Naive thymus-derived CD4-positive, alpha-beta T cell (primary cell): ENCODE measurements at regions of chr4 and their contacts with region 1.

Region 1: DNA sequence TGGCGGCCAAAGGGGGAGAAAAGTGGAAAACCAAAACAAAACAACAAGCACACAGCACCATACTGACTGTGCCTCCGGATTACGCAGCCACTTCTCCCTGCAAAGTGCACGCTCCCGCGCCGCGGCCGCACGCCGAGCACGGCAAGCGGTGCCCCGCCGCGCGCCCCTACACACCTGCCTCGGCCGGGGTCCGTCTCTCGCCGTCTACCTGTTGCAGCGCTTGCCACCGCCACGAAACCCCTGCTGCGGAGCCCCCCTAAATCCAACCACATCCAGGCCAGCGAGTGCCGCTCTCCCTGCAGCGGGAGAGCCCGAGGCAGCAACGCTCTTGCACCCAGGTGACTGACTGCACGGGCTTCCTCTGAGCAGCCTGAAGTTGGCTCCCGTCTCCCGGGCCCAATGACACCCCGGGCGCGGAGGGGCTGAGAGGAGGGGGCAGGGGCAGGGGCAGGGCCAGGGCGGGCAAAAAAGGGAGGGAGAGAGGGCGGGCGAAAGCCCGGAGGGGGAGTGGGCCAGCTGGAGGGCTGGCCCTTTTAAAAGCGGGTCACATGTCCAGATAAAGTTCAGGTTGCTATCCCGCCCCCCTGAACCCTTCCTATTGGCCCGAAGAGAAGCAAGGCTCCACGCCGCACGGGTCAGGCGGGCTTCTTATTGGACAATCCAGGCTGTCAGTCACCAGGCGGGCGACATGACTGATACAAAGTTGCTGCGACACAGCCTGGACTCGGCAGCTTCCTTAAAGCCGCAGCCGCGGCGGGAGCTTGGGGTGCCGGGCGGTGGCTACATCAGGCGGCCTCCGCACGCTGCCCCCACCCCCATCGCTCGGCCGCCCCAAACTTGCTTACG is at the start of gene NR3C2:
- DNase-seq: peak; percentile 87 to 100 (median 98)
- ATAC-seq: peak; percentile 88
- H3K4me3 ChIP-seq: peak within 1 kb of the TSS; percentile 99
- H3K4me3 Mint-ChIP-seq: peak within 1 kb of the TSS; percentile 90 to 100 (median 98)
- H3K27ac ChIP-seq: peak within 1 kb of the TSS; percentile 93
- H3K27ac Mint-ChIP-seq: peak within 1 kb of the TSS; percentile 94 to 100 (median 98)
- H3K4me1 ChIP-seq: peaks cover 0 to 29% of the 10 kb centered on the region in 2 donors
- H3K4me1 Mint-ChIP-seq: peaks cover 24 to 60% (median 55%) of the 10 kb centered on the region in 7 donors
- H3K27me3 ChIP-seq: no peaks in the 10 kb centered on the region
- H3K27me3 Mint-ChIP-seq: peaks cover 0 to 58% (median 5%) of the 10 kb centered on the region in 5 donors
- total RNA-seq, gene NR3C2: 2.2 to 55.2 (median 49.3) TPM

Region 2: DNA sequence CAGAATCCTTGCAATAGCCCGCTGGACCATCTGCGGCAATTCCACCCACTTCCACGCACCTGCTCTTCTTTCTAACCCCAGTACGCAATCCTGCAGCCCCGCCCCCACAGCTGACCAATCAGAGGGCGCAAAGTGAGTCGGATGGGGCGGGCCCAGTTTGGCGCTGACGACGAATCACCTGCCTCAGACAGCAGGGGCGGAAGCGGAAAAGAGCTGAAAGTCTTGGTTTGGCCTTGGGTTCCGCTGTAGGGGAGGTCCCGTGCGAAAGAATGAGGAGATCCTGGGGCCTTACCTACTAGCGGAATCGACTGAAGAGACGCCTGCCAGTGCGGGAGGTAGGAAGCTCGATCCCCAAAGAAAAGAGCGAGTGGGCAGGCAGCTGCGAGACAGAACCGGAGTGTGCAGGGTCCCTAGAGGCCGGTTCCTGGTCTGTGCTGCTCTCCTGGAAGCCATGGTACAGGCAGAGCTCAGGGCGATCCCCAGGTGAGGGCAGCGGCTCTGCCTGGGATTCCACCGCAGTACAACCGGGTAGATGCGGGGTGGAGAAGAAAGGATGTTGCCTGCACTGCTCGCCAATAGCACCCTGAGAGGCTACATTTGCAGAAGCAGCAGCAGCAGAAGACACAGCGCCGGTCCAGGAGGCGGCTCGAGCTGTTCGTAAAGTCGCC is 824.9 kb before region 1 on chr4 and contains the start of gene TMEM184C:
- CTCF ChIA-PET with region 1: no interaction called
- POLR2A ChIA-PET with region 1: interaction called, 10 read pairs
- intact Hi-C with region 1: loop called (anchors 1 kb)
- DNase-seq: peak; percentile 97 to 99 (median 98)
- ATAC-seq: peak; percentile 97
- H3K4me3 ChIP-seq: peak within 1 kb of the TSS; percentile 89
- H3K4me3 Mint-ChIP-seq: peak within 1 kb of the TSS; percentile 86 to 98 (median 94)
- H3K27ac ChIP-seq: peak within 1 kb of the TSS; percentile 87
- H3K27ac Mint-ChIP-seq: peak within 1 kb of the TSS; percentile 92 to 99 (median 95)
- H3K4me1 ChIP-seq: peaks cover 21 to 30% of the 10 kb centered on the region in 2 donors
- H3K4me1 Mint-ChIP-seq: peaks cover 21 to 48% (median 33%) of the 10 kb centered on the region in 7 donors
- H3K27me3 ChIP-seq: no peaks in the 10 kb centered on the region
- H3K27me3 Mint-ChIP-seq: peaks cover 0 to 22% (median 4%) of the 10 kb centered on the region in 5 donors
- total RNA-seq, gene TMEM184C: 13.7 to 27.4 (median 19.0) TPM

Region 3: DNA sequence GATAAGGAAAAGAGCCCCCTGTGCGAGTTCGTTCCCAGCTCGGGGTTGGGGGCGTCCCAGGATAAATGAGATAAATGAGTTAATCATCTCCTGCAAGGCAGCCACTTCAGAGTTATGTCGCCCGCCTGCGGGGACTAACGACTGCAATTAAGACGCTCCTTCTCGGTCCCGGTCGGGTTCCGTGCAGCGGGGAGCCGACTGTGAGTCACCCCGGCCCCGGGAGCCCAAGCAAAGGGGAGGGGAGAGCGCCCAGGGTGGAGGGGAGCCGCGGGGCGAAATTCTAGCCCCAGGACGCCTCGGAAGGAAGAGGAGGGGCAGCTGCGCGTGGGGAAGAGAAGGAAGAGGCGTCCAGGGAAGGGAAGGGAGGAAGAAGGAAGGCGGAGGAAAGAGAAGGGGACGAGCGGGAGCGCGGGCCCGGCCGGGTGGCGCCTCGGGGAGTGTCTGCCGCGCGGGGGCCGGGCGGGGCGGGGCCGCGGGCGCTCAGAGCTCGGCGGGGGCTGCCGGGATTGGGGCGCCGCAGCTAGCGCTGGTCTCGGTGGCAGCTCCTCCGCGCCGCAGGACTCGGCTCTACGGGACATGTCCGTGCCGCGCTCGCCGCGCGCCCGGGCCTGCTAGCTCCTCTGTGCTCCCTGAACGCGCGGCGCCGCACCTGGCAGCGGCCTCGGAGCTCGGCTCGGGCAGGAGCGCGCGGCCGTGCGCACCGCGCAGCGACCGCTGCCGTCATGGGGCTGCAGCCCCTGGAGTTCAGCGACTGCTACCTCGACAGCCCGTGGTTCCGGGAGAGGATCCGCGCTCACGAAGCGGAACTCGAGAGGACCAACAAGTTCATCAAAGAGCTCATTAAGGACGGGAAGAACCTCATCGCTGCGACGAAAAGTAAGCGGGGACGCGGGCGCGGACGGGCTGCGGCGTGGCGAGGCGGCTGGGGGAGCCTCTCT is 710.4 kb before region 1 on chr4 and contains the start of gene ARHGAP10:
- CTCF ChIA-PET with region 1: no interaction called
- POLR2A ChIA-PET with region 1: interaction called, 4 read pairs
- intact Hi-C with region 1: loop called (anchors 2 kb)
- DNase-seq: peak; percentile 34 to 74 (median 54)
- ATAC-seq: peak; percentile 79
- H3K4me3 ChIP-seq: peak within 1 kb of the TSS; percentile 76
- H3K4me3 Mint-ChIP-seq: peak within 1 kb of the TSS; percentile 89 to 97 (median 92)
- H3K27ac ChIP-seq: peak within 1 kb of the TSS; percentile 63
- H3K27ac Mint-ChIP-seq: peak within 1 kb of the TSS; percentile 75 to 93 (median 88)
- H3K4me1 ChIP-seq: peaks cover 14 to 15% of the 10 kb centered on the region in 2 donors
- H3K4me1 Mint-ChIP-seq: peaks cover 13 to 42% (median 24%) of the 10 kb centered on the region in 7 donors
- H3K27me3 ChIP-seq: no peaks in the 10 kb centered on the region
- H3K27me3 Mint-ChIP-seq: peaks cover 0 to 41% (median 0%) of the 10 kb centered on the region in 5 donors
- total RNA-seq, gene ARHGAP10: 2.9 to 8.5 (median 3.2) TPM

Region 4: DNA sequence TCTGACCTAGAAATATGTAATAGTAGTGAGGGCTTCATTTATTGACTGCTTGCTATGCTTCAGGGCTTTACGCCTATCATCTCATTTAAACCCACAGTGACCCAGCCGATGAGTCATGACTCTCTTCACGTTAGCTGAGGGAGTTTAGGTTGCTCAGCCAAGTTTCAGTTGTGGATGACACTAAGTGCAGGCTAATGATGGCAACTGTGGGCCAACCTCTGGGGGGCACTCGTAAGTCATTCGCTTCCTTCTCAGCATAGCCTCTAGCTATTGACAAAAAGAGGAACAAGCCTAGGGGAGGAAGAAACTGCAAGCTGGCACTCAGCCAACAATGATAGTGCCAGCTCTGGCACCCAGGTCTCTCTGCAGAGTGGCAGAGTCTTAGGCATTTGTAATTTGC is 385.3 kb before region 1 on chr4:
- CTCF ChIA-PET with region 1: no interaction called
- POLR2A ChIA-PET with region 1: interaction called, 99 read pairs
- intact Hi-C with region 1: loop called (anchors 1 to 2 kb)
- DNase-seq: peak in 6 of 9 donors; percentile 22 to 40 (median 28)
- ATAC-seq: peak; percentile 80
- H3K4me3 ChIP-seq: no peak overlapping the region
- H3K4me3 Mint-ChIP-seq: peak overlapping the region in 9 of 10 donors; percentile 10 to 64 (median 29)
- H3K27ac ChIP-seq: no peak overlapping the region
- H3K27ac Mint-ChIP-seq: peak overlapping the region; percentile 48 to 99 (median 84)
- H3K4me1 ChIP-seq: peaks cover 58 to 64% of the 10 kb centered on the region in 2 donors
- H3K4me1 Mint-ChIP-seq: peaks cover 59 to 98% (median 94%) of the 10 kb centered on the region in 7 donors
- H3K27me3 ChIP-seq: no peaks in the 10 kb centered on the region
- H3K27me3 Mint-ChIP-seq: no peaks in the 10 kb centered on the region

Region 5: DNA sequence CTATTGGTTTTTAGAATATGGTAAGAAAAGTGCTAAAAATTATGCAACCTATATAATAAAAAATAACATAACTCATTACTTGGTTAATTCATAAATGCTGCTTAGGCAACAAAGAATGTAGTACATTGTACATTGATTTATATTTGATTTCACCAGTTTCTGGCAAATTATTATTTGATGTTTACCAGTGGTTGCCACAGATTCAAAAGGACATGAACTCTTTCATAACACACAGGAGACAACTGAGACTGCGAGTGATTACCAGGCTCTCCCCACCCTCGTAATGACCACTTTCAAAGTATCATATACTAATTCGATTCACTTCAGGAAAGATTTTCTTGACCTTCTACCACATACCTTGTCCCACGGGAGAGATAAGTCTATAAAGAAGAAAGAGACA is 158.5 kb before region 1 on chr4:
- CTCF ChIA-PET with region 1: no interaction called
- POLR2A ChIA-PET with region 1: interaction called, 7 read pairs
- intact Hi-C with region 1: loop called in 1 of 2 experiments (anchors 2 kb)
- DNase-seq: no peak
- ATAC-seq: no peak
- H3K4me3 ChIP-seq: no peak overlapping the region
- H3K4me3 Mint-ChIP-seq: no peak overlapping the region
- H3K27ac ChIP-seq: no peak overlapping the region
- H3K27ac Mint-ChIP-seq: no peak overlapping the region
- H3K4me1 ChIP-seq: no peaks in the 10 kb centered on the region
- H3K4me1 Mint-ChIP-seq: peaks cover 0 to 59% (median 37%) of the 10 kb centered on the region in 7 donors
- H3K27me3 ChIP-seq: no peaks in the 10 kb centered on the region
- H3K27me3 Mint-ChIP-seq: no peaks in the 10 kb centered on the region

Region 6: GRCh38 chr4:148376151-148376550 is 66.1 kb before region 1 on chr4:
- CTCF ChIA-PET with region 1: interaction called, 7 read pairs
- POLR2A ChIA-PET with region 1: interaction called, 63 read pairs
- intact Hi-C with region 1: loop called in 1 of 2 experiments (anchors 1 kb)
- DNase-seq: peak in 7 of 9 donors; percentile 64 to 84 (median 76)
- ATAC-seq: peak; percentile 86
- H3K4me3 ChIP-seq: peak overlapping the region; percentile 37
- H3K4me3 Mint-ChIP-seq: peak overlapping the region in 9 of 10 donors; percentile 67 to 88 (median 82)
- H3K27ac ChIP-seq: peak overlapping the region; percentile 59
- H3K27ac Mint-ChIP-seq: peak overlapping the region in 8 of 9 donors; percentile 88 to 99 (median 92)
- H3K4me1 ChIP-seq: peaks cover 0 to 8% of the 10 kb centered on the region in 2 donors
- H3K4me1 Mint-ChIP-seq: peaks cover 6 to 61% (median 44%) of the 10 kb centered on the region in 7 donors
- H3K27me3 ChIP-seq: no peaks in the 10 kb centered on the region
- H3K27me3 Mint-ChIP-seq: no peaks in the 10 kb centered on the region

Region 7: GRCh38 chr4:148425327-148426110 is 16.7 kb before region 1 on chr4:
- CTCF ChIA-PET with region 1: no interaction called
- POLR2A ChIA-PET with region 1: interaction called, 21 read pairs
- intact Hi-C with region 1: loop called in 1 of 2 experiments (anchors 2 kb)
- DNase-seq: no peak
- ATAC-seq: no peak
- H3K4me3 ChIP-seq: no peak overlapping the region
- H3K4me3 Mint-ChIP-seq: peak overlapping the region in 6 of 10 donors; percentile 0 to 53 (median 20)
- H3K27ac ChIP-seq: no peak overlapping the region
- H3K27ac Mint-ChIP-seq: peak overlapping the region in 1 of 9 donors; percentile 5
- H3K4me1 ChIP-seq: peaks cover 4 to 16% of the 10 kb centered on the region in 2 donors
- H3K4me1 Mint-ChIP-seq: peaks cover 0 to 100% (median 84%) of the 10 kb centered on the region in 7 donors
- H3K27me3 ChIP-seq: no peaks in the 10 kb centered on the region
- H3K27me3 Mint-ChIP-seq: no peaks in the 10 kb centered on the region

Region 8: GRCh38 chr4:148487181-148487580 is 45.0 kb after region 1 on chr4:
- CTCF ChIA-PET with region 1: no interaction called
- POLR2A ChIA-PET with region 1: no interaction called
- intact Hi-C with region 1: no loop called
- DNase-seq: no peak
- ATAC-seq: no peak
- H3K4me3 ChIP-seq: no peak overlapping the region
- H3K4me3 Mint-ChIP-seq: no peak overlapping the region
- H3K27ac ChIP-seq: no peak overlapping the region
- H3K27ac Mint-ChIP-seq: no peak overlapping the region
- H3K4me1 ChIP-seq: no peaks in the 10 kb centered on the region
- H3K4me1 Mint-ChIP-seq: peaks cover 0 to 1% (median 0%) of the 10 kb centered on the region in 7 donors
- H3K27me3 ChIP-seq: no peaks in the 10 kb centered on the region
- H3K27me3 Mint-ChIP-seq: no peaks in the 10 kb centered on the region